Naive thymus-derived CD8-positive, alpha-beta T cell (primary cell): ENCODE measurements at regions of chr14 and their contacts with region 1.

Region 1: DNA sequence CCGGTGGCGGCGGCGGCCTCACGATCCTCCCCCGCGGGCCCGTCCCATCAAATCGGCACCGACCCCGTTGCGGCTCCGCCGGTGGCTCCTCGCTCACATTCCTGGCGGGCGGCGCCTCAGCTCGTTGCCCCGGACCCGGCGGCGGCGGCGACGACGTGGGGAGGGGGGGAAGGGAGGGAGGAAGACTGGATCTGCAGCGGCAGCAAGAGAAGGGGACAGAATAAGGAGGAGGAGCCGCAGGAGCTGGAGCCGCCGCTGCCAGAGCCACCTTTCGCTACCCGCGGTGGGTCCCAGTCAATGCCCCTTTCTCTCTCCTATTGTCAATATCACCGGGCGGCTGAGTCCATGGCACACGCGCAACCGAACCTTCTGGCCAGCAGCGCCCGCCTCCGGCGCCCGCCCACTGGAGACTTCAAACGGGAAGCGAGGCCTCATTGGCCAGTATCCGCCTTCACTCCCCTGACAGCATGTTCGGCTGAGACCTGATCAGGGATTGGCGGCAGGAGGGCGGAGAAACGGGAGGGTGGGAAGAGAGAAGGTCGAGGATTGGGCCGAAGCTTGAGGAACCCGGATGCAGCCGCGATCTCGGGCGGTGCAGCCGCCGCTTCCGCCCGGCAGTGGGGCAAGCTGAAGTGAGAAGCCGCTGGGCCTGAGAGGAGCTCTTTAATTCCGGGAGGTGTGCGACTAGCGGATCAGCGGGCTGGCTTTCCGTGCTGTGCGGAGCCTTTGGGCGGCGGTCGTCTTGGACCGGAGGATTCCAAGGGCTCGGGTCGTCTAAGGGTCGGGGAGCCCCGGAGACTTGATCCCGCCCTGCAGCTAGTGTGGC is at the start of gene PPP2R5E:
- DNase-seq: peak; percentile 87 to 99 (median 98)
- ATAC-seq: peak; percentile 92 to 96
- H3K4me3 Mint-ChIP-seq: peak within 1 kb of the TSS; percentile 92 to 99 (median 96)
- H3K27ac Mint-ChIP-seq: peak within 1 kb of the TSS; percentile 91 to 99 (median 94)
- H3K4me1 Mint-ChIP-seq: peaks cover 13 to 48% (median 38%) of the 10 kb centered on the region in 4 donors
- H3K27me3 Mint-ChIP-seq: no peaks in the 10 kb centered on the region
- polyA plus RNA-seq, gene PPP2R5E: 32.3 to 33.3 (median 32.8) TPM

Region 2: DNA sequence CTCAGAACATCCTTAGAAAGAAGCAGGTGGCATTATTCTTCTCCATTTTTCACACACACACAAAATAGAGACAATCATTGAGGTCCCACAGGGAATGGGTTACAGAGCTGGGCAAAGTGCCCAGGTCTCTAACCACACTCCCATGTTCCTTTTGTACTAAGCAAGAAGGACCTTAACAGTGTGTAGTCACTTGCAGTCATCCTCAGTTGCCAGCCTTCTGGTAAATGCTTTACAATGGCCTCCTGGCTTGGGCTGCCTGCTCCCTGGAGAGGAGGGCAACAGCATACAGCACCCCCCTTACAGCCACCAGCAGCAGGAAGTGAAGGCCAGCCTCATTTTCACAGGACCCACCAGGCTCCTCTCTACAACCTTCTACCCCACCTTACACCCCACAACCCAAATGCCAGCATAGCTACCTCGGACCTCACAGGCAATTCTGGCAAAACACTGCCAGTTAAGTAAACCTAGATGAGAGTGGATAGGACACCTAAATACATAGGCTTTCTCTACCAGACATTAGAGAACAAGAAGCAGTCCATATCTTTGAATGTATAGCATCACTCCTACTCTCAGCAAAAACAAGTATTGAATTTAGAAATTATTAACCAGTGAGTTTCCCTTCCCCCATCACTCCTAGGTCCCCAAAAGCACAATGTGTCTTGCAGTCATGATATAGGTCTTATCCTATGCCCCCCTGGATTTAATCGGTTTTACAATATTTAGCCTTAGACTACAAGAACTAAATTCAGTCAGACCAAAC is 88.2 kb before region 1 on chr14:
- POLR2A ChIA-PET with region 1: no interaction called
- DNase-seq: no peak
- ATAC-seq: no peak
- H3K4me3 Mint-ChIP-seq: no peak overlapping the region
- H3K27ac Mint-ChIP-seq: peak overlapping the region in 8 of 10 donors; percentile 11 to 70 (median 39)
- H3K4me1 Mint-ChIP-seq: peaks cover 21 to 53% (median 37%) of the 10 kb centered on the region in 4 donors
- H3K27me3 Mint-ChIP-seq: no peaks in the 10 kb centered on the region

Region 3: GRCh38 chr14:63641473-63642228 is 98.4 kb after region 1 on chr14 and contains the start of gene WDR89:
- POLR2A ChIA-PET with region 1: interaction called, 33 read pairs
- DNase-seq: peak in 9 of 10 donors; percentile 81 to 98 (median 97)
- ATAC-seq: peak; percentile 86
- H3K4me3 Mint-ChIP-seq: peak within 1 kb of the TSS; percentile 82 to 99 (median 94)
- H3K27ac Mint-ChIP-seq: peak within 1 kb of the TSS; percentile 93 to 98 (median 96)
- H3K4me1 Mint-ChIP-seq: peaks cover 16 to 65% (median 45%) of the 10 kb centered on the region in 4 donors
- H3K27me3 Mint-ChIP-seq: peaks cover 0 to 2% (median 0%) of the 10 kb centered on the region in 5 donors
- polyA plus RNA-seq, gene WDR89: 18.7 to 21.6 (median 20.5) TPM

Region 4: GRCh38 chr14:63650256-63650952 is 107.2 kb after region 1 on chr14:
- POLR2A ChIA-PET with region 1: interaction called, 36 read pairs
- DNase-seq: peak; percentile 26 to 90 (median 73)
- ATAC-seq: peak; percentile 97
- H3K4me3 Mint-ChIP-seq: peak overlapping the region; percentile 61 to 88 (median 82)
- H3K27ac Mint-ChIP-seq: peak overlapping the region; percentile 99 to 100 (median 99)
- H3K4me1 Mint-ChIP-seq: peaks cover 20 to 63% (median 40%) of the 10 kb centered on the region in 4 donors
- H3K27me3 Mint-ChIP-seq: no peaks in the 10 kb centered on the region